Prostate gland (tissue), 2 donors: ENCODE measurements at regions of chr11 and their contacts with region 1.

Region 1: DNA sequence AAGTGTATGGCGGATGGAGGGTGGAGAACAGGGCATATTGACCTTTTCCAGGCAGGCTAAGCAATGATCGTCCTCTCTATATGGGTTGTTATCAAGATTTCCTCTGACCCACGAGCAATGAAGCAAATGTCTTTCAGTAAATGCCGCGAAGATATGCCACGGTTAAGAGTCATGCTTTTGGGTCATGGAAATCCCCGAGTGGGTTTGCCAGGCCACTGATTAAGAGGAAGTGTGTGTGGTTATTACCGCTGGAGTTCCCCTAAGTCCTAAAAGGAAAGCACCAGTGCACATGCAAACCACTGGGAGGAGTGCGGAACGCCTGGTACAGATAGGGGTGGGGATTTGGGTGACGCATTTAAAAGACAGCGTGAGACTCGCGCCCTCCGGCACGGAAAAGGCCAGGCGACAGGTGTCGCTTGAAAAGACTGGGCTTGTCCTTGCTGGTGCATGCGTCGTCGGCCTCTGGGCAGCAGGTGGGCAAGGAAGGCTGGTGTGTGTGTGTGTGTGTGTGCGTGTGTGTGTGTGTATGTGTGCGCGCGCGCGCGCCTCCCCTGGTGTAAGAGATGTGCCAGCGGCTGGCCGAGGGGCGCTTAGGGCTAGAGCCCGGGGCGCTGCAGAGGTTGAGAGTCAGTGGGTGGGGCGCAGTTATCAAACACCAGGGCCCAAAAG is at the start of gene BIRC3:
- DNase-seq: peak; percentile 87
- H3K4me3 ChIP-seq: peak within 1 kb of the TSS; percentile 40 to 45
- H3K27ac ChIP-seq: peak within 1 kb of the TSS; percentile 65 to 74
- H3K4me1 ChIP-seq: no peaks in the 10 kb centered on the region
- H3K27me3 ChIP-seq: no peaks in the 10 kb centered on the region
- CTCF ChIP-seq: peak in 2 of 4 experiments; percentile 49 to 60
- POLR2A ChIP-seq: peak; percentile 63
- total RNA-seq, gene BIRC3: 5.2 to 9.2 TPM

Region 2: GRCh38 chr11:102287964-102288724 is 29.1 kb before region 1 on chr11:
- intact Hi-C with region 1: loop called (anchors 2 kb)
- DNase-seq: peak; percentile 50
- H3K4me3 ChIP-seq: no peak overlapping the region
- H3K27ac ChIP-seq: no peak overlapping the region
- H3K4me1 ChIP-seq: no peaks in the 10 kb centered on the region
- H3K27me3 ChIP-seq: no peaks in the 10 kb centered on the region
- CTCF ChIP-seq: peak; percentile 54 to 84 (median 76)
- POLR2A ChIP-seq: no peak